Dorsolateral prefrontal cortex (tissue), 120 donors: ENCODE measurements at regions of chr1 and their contacts with region 1.

Region 1: DNA sequence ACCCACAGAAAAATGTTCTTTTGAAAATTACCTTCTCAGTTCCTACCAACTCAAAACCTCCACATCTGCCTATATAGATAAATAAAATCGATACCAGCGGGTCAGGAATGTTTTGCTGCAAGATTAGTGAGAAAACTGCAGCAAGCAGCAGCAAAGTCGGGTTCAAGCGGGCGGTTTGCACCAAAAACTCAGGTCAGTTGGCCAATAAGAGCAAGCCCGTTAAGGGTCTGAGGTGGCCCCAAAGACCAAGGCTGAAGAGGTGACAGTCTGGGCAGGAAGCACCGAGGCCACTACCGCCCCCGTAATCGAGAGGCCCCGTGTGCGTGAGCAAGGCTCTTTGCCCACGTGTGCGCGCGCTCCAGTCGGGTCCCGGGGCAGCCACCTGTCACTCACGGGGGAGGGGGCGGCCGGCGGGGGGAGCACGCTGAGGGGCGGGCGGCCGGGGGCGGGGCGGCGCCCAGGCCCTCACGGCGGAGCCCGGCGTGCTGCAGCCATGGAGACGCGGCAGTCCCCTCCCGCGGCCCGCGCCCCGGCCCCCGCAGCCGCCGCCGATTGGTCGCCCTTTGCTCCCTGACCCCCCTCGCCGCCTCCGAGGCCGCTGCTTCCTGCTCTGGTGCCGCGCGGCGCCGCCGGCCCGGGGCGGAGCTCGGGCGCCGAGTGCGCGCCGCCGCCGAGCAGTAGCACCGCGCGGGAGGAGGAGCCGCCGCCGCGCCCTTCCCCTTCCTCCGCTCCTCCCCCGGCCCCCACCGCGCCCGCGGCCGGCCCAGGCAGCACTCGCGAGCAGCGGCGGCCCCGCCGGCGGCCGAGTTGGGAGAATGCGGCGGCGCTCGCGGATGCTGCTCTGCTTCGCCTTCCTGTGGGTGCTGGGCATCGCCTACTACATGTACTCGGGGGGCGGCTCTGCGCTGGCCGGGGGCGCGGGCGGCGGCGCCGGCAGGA is at the start of gene GALNT2:
- DNase-seq: peak; percentile 74 to 93 (median 86)
- H3K4me3 ChIP-seq: peak within 1 kb of the TSS; percentile 65 to 95 (median 86)
- H3K27ac ChIP-seq: peak within 1 kb of the TSS; percentile 52 to 94 (median 86)
- H3K27me3 ChIP-seq: no peaks in the 10 kb centered on the region
- CTCF ChIP-seq: peak in 12 of 56 donors; percentile 10 to 46 (median 20)
- total RNA-seq, gene GALNT2: 32.6 to 75.9 (median 45.2) TPM

Region 2: GRCh38 chr1:229661022-229661877 is 405.5 kb before region 1 on chr1:
- intact Hi-C with region 1: loop called (anchors 5 kb)
- DNase-seq: peak; percentile 77 to 89 (median 86)
- H3K4me3 ChIP-seq: peak overlapping the region in 1 of 59 donors; percentile 13
- H3K27ac ChIP-seq: peak overlapping the region in 51 of 59 donors; percentile 4 to 79 (median 58)
- H3K27me3 ChIP-seq: no peaks in the 10 kb centered on the region
- CTCF ChIP-seq: peak; percentile 79 to 98 (median 94)

Region 3: DNA sequence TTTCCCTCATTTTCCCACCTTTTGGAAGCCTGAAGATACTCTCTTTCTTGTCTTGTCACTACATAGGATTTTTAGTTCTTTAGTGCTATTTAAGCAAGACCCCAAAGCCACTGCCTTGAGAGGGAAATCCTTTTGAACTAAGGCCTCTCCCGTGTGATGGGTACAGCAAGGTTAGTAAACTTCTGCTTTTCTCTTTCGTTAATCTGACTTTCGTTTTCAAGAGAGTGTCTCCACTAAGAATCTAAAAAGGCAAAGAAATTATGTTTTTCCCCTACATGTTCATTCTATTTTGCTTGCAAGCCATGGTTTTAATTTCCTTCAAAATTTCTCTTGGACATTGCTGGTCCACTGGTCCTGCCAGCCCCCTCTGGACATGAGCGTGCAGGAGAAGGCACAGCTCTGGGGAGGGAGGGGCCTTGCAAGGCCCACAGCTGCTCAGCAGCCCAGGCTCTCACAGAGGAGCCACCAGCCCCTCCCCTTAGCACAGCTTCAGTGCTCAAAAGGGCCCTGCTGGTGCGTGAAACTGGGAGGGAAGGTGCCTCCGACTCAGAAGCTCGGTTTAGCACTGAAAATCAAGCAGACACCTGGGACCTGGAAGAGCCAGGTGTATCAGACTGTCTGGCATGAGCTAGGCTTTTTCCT is 210.6 kb before region 1 on chr1:
- intact Hi-C with region 1: loop called in 1 of 2 experiments (anchors 10 kb)
- DNase-seq: peak in 9 of 10 donors; percentile 44 to 73 (median 53)
- H3K4me3 ChIP-seq: peak overlapping the region in 33 of 59 donors; percentile 1 to 54 (median 29)
- H3K27ac ChIP-seq: peak overlapping the region in 38 of 59 donors; percentile 0 to 75 (median 43)
- H3K27me3 ChIP-seq: no peaks in the 10 kb centered on the region
- CTCF ChIP-seq: peak in 1 of 56 donors; percentile 24

Region 4: DNA sequence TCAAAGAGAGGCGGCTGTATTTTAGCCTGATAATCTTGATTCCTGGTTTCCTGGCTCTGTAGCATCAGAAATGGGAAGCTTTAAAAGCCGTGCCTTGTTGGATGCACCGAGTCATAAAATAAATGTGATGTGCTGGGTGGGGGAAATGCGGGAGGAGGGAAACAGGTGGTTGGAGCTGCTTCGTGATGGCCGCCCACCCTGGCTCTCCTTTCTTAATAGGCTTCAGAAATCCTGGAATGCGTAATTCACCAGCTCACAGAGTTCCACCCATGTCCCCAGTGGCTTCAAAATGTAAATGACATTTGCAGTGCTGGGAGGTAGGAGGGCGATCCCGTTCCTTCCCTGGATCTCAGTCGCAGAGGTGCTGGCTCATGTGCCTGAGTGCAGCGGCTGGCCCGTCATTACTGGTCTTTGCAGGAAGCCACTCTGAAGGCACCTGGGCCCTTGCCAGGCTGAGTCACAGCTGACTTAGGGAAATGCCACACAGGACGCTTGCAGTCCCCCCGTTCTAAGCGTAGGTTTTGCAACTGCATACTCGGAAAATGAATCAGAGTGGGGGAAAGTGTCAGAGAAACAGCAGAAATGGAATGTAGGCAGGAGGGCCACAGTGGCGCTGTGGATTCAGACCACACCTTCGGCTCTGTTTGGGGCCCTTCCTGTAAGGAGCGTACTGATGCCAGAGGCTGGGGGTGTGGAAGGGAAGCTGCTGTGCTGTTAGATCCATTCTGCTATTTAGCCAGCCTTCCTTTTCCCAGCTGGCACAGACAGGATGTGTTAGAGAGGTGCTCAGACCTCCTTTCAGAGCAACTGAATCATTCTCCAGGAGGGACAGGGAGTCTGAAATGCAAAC is 37.9 kb after region 1 on chr1:
- intact Hi-C with region 1: loop called in 1 of 2 experiments (anchors 5 kb)
- DNase-seq: peak; percentile 69 to 97 (median 86)
- H3K4me3 ChIP-seq: peak overlapping the region in 38 of 59 donors; percentile 0 to 48 (median 18)
- H3K27ac ChIP-seq: peak overlapping the region in 45 of 59 donors; percentile 1 to 87 (median 53)
- H3K27me3 ChIP-seq: no peaks in the 10 kb centered on the region
- CTCF ChIP-seq: peak in 9 of 56 donors; percentile 1 to 24 (median 12)

Region 5: GRCh38 chr1:230149751-230150584 is 83.2 kb after region 1 on chr1:
- intact Hi-C with region 1: loop called (anchors 5 kb)
- DNase-seq: no peak
- H3K4me3 ChIP-seq: peak overlapping the region in 5 of 59 donors; percentile 2 to 22 (median 8)
- H3K27ac ChIP-seq: peak overlapping the region in 16 of 59 donors; percentile 4 to 59 (median 30)
- H3K27me3 ChIP-seq: no peaks in the 10 kb centered on the region
- CTCF ChIP-seq: no peak

Region 6: DNA sequence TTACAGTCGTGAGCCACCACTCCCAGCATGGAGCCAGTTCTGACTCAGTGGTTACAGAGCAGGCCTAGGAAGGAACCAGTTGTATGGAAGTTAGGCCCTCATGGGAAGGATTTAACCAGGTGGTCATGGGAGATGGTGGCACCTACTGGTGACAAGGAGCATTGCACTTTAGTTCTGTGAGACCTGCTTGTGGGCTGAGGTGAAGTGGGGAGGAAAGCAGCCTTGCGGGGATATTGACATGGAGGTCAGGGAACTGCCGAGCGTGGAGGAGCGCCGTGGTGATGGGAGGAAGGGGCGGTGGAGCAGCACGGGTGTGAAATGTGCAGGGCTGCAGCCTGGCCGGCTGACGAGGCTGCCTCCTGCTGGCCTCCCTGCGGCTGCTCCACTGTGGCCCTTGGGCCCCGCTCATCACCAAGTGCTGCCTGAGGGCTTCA is 100.7 kb after region 1 on chr1:
- intact Hi-C with region 1: loop called in 1 of 2 experiments (anchors 5 kb)
- DNase-seq: peak in 1 of 10 donors; percentile 10
- H3K4me3 ChIP-seq: no peak overlapping the region
- H3K27ac ChIP-seq: peak overlapping the region in 2 of 59 donors; percentile 16 to 89
- H3K27me3 ChIP-seq: no peaks in the 10 kb centered on the region
- CTCF ChIP-seq: peak; percentile 16 to 73 (median 57)